ENCODE measurements at regions of chr5 and their contacts with region 1.

Region 1: GRCh38 chr5:103016176-103016575 is 103.8 kb downstream of the GIN1 start:
- DNase-seq: no peak
- H3K4me3 ChIP-seq: no peak overlapping the region
- H3K27ac ChIP-seq: no peak overlapping the region
- H3K4me1 ChIP-seq: peaks cover 0 to 5% of the 10 kb centered on the region in 2 experiments; a peak in 2 of 4 replicates
- H3K27me3 ChIP-seq: no peaks in the 10 kb centered on the region
- CTCF ChIP-seq: no peak
- EP300 ChIP-seq: peak in 1 of 2 experiments; percentile 49; a peak in 1 of 4 replicates
- RAD21 ChIP-seq: no peak

Region 2: DNA sequence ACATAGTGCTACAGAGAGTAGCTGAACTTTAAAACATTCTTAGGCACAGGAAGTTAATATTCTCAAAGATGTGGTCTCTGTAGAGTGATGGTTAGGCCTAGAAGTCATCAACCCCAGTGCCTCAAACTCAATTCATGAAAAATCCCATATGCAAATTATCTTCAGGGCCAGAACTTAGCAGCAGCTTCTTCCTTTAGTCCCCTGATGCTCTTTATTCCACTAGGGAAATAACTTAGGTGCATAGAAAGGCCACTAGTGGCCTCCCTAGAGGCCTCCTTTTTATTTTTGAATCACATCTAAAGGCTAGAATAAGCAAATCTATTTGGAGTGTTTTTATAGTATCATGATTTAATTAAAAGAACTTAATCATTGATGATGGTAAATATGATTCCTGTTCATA is 15.4 kb after region 1 on chr5:
- CTCF ChIA-PET with region 1: interaction called, 11 read pairs
- POLR2A ChIA-PET with region 1: no interaction called
- DNase-seq: no peak
- H3K4me3 ChIP-seq: no peak overlapping the region
- H3K27ac ChIP-seq: no peak overlapping the region
- H3K4me1 ChIP-seq: no peaks in the 10 kb centered on the region
- H3K27me3 ChIP-seq: no peaks in the 10 kb centered on the region
- CTCF ChIP-seq: peak; percentile 48
- EP300 ChIP-seq: no peak
- RAD21 ChIP-seq: no peak

Region 3: GRCh38 chr5:103075442-103075841 is 59.3 kb after region 1 on chr5:
- CTCF ChIA-PET with region 1: no interaction called
- POLR2A ChIA-PET with region 1: no interaction called
- DNase-seq: no peak
- H3K4me3 ChIP-seq: no peak overlapping the region
- H3K27ac ChIP-seq: no peak overlapping the region
- H3K4me1 ChIP-seq: no peaks in the 10 kb centered on the region
- H3K27me3 ChIP-seq: no peaks in the 10 kb centered on the region
- CTCF ChIP-seq: no peak
- EP300 ChIP-seq: no peak
- RAD21 ChIP-seq: no peak

Measured in SK-N-SH (cell line).